PC-3 (cell line): ENCODE measurements at regions of chr5 and their contacts with region 1.

Region 1: GRCh38 chr5:102865510-102866236 is 110.6 kb downstream of the PAM start:
- DNase-seq: peak; percentile 81
- ATAC-seq: peak; percentile 81
- H3K4me3 ChIP-seq: peak overlapping the region; percentile 87
- H3K27ac ChIP-seq: peak overlapping the region; percentile 58
- H3K4me1 ChIP-seq: peaks cover 22% of the 10 kb centered on the region
- H3K27me3 ChIP-seq: no peaks in the 10 kb centered on the region
- CTCF ChIP-seq: no peak

Region 2: GRCh38 chr5:102792705-102793104 is 73.0 kb before region 1 on chr5:
- CTCF ChIA-PET with region 1: no interaction called
- POLR2A ChIA-PET with region 1: no interaction called
- intact Hi-C with region 1: loop called (anchors 2 kb)
- DNase-seq: peak; percentile 66
- ATAC-seq: 0 out of 2 replicates have a peak, but pooled peaks have one; percentile 24
- H3K4me3 ChIP-seq: no peak overlapping the region
- H3K27ac ChIP-seq: no peak overlapping the region
- H3K4me1 ChIP-seq: peaks cover 24% of the 10 kb centered on the region
- H3K27me3 ChIP-seq: no peaks in the 10 kb centered on the region
- CTCF ChIP-seq: peak; percentile 92

Region 3: GRCh38 chr5:102921341-102922047 is 55.8 kb after region 1 on chr5:
- CTCF ChIA-PET with region 1: no interaction called
- POLR2A ChIA-PET with region 1: no interaction called
- intact Hi-C with region 1: loop called (anchors 1 kb)
- DNase-seq: peak; percentile 70
- ATAC-seq: peak; percentile 79
- H3K4me3 ChIP-seq: no peak overlapping the region
- H3K27ac ChIP-seq: peak overlapping the region; percentile 83
- H3K4me1 ChIP-seq: peaks cover 36% of the 10 kb centered on the region
- H3K27me3 ChIP-seq: no peaks in the 10 kb centered on the region
- CTCF ChIP-seq: no peak

Region 4: GRCh38 chr5:102971697-102972293 is 106.1 kb after region 1 on chr5:
- CTCF ChIA-PET with region 1: interaction called, 4 read pairs
- POLR2A ChIA-PET with region 1: no interaction called
- intact Hi-C with region 1: loop called (anchors 2 kb)
- DNase-seq: peak; percentile 70
- ATAC-seq: peak; percentile 82
- H3K4me3 ChIP-seq: no peak overlapping the region
- H3K27ac ChIP-seq: no peak overlapping the region
- H3K4me1 ChIP-seq: peaks cover 6% of the 10 kb centered on the region; the same call in 1 of the 2 replicates
- H3K27me3 ChIP-seq: no peaks in the 10 kb centered on the region
- CTCF ChIP-seq: peak; percentile 86

Region 5: GRCh38 chr5:104218193-104218592 is 1352.5 kb after region 1 on chr5:
- CTCF ChIA-PET with region 1: no interaction called
- POLR2A ChIA-PET with region 1: no interaction called
- intact Hi-C with region 1: loop called (anchors 5 kb)
- DNase-seq: no peak
- ATAC-seq: no peak
- H3K4me3 ChIP-seq: no peak overlapping the region
- H3K27ac ChIP-seq: no peak overlapping the region
- H3K4me1 ChIP-seq: no peaks in the 10 kb centered on the region
- H3K27me3 ChIP-seq: no peaks in the 10 kb centered on the region
- CTCF ChIP-seq: no peak